Mammary epithelial cell (primary cell): ENCODE measurements at regions of chr5 and their contacts with region 1.

Region 1: GRCh38 chr5:43313035-43313853 is at the start of gene HMGCS1:
- DNase-seq: peak; percentile 100
- H3K4me3 ChIP-seq: peak within 1 kb of the TSS; percentile 93 to 98 (median 97)
- H3K27ac ChIP-seq: peak within 1 kb of the TSS; percentile 97
- H3K4me1 ChIP-seq: peaks cover 46% of the 10 kb centered on the region
- H3K27me3 ChIP-seq: no peaks in the 10 kb centered on the region
- CTCF ChIP-seq: no peak
- total RNA-seq, gene HMGCS1: 68.8 to 218 TPM

Region 2: GRCh38 chr5:43120720-43121564 is 192.3 kb before region 1 on chr5 and contains the start of gene ZNF131:
- CTCF ChIA-PET with region 1: no interaction called
- dilution Hi-C with region 1: no loop called
- in situ Hi-C with region 1: no loop called
- intact Hi-C with region 1: loop called (anchors 5 kb)
- DNase-seq: peak; percentile 96
- H3K4me3 ChIP-seq: peak within 1 kb of the TSS; percentile 68 to 88 (median 87)
- H3K27ac ChIP-seq: peak within 1 kb of the TSS; percentile 94
- H3K4me1 ChIP-seq: peaks cover 21% of the 10 kb centered on the region
- H3K27me3 ChIP-seq: no peaks in the 10 kb centered on the region
- CTCF ChIP-seq: no peak
- total RNA-seq, gene ZNF131: 28.7 to 36.2 TPM

Region 3: GRCh38 chr5:43367909-43368648 is 54.8 kb after region 1 on chr5:
- CTCF ChIA-PET with region 1: no interaction called
- dilution Hi-C with region 1: no loop called
- in situ Hi-C with region 1: loop called in 1 of 2 experiments (anchors 10 kb)
- intact Hi-C with region 1: loop called (anchors 2 kb)
- DNase-seq: peak; percentile 47
- H3K4me3 ChIP-seq: no peak overlapping the region
- H3K27ac ChIP-seq: peak overlapping the region; percentile 30
- H3K4me1 ChIP-seq: peaks cover 12% of the 10 kb centered on the region
- H3K27me3 ChIP-seq: no peaks in the 10 kb centered on the region
- CTCF ChIP-seq: no peak

Region 4: DNA sequence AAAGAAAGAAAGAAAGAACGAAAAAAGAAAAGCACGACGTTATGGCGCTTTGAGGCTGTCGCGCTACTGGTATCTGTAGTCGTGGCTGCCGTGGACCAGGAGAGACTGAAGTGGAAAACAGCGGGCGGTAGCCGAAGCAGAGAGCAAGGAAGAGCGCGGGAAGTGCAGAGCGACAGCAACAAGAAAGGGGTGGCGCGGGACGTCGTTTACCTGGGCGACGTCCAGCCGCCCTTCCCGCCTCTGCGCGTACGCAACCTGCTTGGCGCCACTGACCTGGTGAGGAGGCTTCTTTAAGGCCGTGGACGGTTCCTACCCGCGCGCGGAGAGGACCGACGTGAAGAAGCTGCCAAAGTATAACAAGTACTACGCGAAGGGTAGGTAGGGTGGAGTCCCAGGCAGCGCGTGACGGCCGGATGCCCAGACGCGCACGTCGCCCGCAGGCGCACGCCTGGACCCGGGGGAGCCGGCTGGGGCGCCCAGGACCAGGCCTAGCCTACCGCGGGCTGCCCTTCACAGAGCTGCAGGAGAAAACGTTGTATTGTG is 83.6 kb after region 1 on chr5:
- CTCF ChIA-PET with region 1: no interaction called
- dilution Hi-C with region 1: no loop called
- in situ Hi-C with region 1: no loop called
- intact Hi-C with region 1: no loop called
- DNase-seq: peak; percentile 60
- H3K4me3 ChIP-seq: peak overlapping the region; percentile 51 to 76 (median 62)
- H3K27ac ChIP-seq: peak overlapping the region; percentile 28
- H3K4me1 ChIP-seq: peaks cover 7% of the 10 kb centered on the region
- H3K27me3 ChIP-seq: no peaks in the 10 kb centered on the region
- CTCF ChIP-seq: no peak